Endothelial cell of umbilical vein (primary cell): ENCODE measurements at regions of chr10 and their contacts with region 1.

Region 1: GRCh38 chr10:97572214-97572989 is at the start of gene ANKRD2:
- DNase-seq: peak; percentile 66
- H3K4me3 ChIP-seq: no peak within 1 kb of the TSS
- H3K27ac ChIP-seq: no peak within 1 kb of the TSS
- H3K4me1 ChIP-seq: peaks cover 14% of the 10 kb centered on the region
- H3K27me3 ChIP-seq: no peaks in the 10 kb centered on the region
- CTCF ChIP-seq: peak; percentile 87 to 96
- POLR2A ChIP-seq: no peak
- total RNA-seq, gene ANKRD2: 1.6 and 2.3 TPM in 2 replicates

Region 2: GRCh38 chr10:97200616-97201015 is 371.8 kb before region 1 on chr10:
- CTCF ChIA-PET with region 1: no interaction called
- POLR2A ChIA-PET with region 1: no interaction called
- dilution Hi-C with region 1: no loop called
- intact Hi-C with region 1: no loop called
- DNase-seq: no peak
- H3K4me3 ChIP-seq: no peak overlapping the region
- H3K27ac ChIP-seq: no peak overlapping the region
- H3K4me1 ChIP-seq: no peaks in the 10 kb centered on the region
- H3K27me3 ChIP-seq: peaks cover 3% of the 10 kb centered on the region in 2 experiments
- CTCF ChIP-seq: no peak
- POLR2A ChIP-seq: no peak

Region 3: DNA sequence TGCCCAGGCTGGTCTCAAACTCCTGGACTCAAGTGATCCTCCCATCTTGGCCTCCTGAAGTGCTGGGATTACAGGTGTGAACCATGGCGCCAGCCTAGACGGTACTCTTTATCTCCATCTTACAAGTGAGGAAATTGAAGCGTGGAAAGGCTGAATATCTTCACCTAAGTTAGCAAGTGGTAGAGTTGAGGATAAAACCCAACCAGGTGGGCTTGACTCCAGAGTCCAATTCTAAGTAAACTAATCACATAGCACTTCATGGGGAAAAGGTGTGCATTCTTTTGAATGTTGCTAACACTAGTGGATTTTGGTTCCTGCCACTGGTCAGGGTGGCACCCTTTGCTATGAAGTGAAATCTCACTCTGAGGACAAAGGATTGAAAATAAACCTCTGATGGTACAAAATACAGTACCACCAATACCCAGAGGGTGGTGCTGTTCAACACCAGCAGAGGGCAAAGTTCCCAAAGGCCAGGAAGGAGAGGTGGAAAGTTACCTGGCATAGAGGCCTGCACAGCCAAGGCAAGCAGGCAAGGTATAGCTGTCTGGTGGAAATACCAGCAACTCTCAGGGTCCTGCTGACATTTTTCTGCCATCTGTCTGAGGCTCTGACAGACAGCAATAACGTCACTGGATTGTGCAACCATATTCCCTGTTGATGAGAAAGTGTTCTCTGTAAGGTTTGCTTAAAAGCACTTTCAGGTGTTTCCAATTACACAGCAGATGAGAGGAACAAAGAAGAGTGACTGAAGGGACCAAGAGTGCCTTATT is 108.9 kb before region 1 on chr10:
- CTCF ChIA-PET with region 1: interaction called, 12 read pairs
- POLR2A ChIA-PET with region 1: no interaction called
- dilution Hi-C with region 1: no loop called
- intact Hi-C with region 1: no loop called
- DNase-seq: peak; percentile 68
- H3K4me3 ChIP-seq: no peak overlapping the region
- H3K27ac ChIP-seq: no peak overlapping the region
- H3K4me1 ChIP-seq: peaks cover 3% of the 10 kb centered on the region
- H3K27me3 ChIP-seq: no peaks in the 10 kb centered on the region
- CTCF ChIP-seq: peak; percentile 75 to 76
- POLR2A ChIP-seq: no peak

Region 4: DNA sequence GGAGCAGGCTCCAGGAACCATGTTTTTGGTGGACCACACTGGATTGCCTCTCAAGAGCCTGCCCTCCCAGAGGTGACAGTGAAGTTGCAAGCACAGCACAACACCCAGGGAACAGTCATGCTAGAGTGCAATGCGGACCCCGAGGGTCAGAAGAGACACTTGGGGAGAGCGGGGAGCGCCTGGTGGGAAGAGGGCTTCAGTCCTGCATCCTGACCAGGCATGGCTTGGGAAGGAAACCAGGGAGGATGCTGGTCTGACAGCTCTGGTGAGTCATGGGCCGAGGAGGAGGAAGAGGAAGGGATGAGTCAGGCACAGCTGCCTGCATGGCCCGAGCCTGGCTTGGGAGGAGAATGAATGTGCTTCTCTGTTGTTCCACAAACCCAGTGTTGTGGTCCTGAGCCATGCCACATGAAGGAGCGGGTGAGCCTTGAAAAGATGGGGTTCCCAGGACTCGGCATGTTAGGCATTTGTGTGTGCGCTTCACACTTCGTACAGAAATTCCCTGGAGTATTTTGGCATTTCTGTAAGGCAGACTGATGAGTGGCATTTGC is 29.3 kb before region 1 on chr10:
- CTCF ChIA-PET with region 1: interaction called, 7 read pairs
- POLR2A ChIA-PET with region 1: no interaction called
- dilution Hi-C with region 1: no loop called
- intact Hi-C with region 1: loop called (anchors 1 kb)
- DNase-seq: peak; percentile 98
- H3K4me3 ChIP-seq: no peak overlapping the region
- H3K27ac ChIP-seq: peak overlapping the region; percentile 99
- H3K4me1 ChIP-seq: peaks cover 61% of the 10 kb centered on the region
- H3K27me3 ChIP-seq: no peaks in the 10 kb centered on the region
- CTCF ChIP-seq: no peak
- POLR2A ChIP-seq: peak; percentile 80

Region 5: GRCh38 chr10:97584060-97584797 is 11.8 kb after region 1 on chr10 and contains the start of gene HOGA1:
- CTCF ChIA-PET with region 1: interaction called, 10 read pairs
- POLR2A ChIA-PET with region 1: no interaction called
- dilution Hi-C with region 1: no loop called
- intact Hi-C with region 1: no loop called
- DNase-seq: peak; percentile 47
- H3K4me3 ChIP-seq: no peak within 1 kb of the TSS
- H3K27ac ChIP-seq: no peak within 1 kb of the TSS
- H3K4me1 ChIP-seq: no peaks in the 10 kb centered on the region
- H3K27me3 ChIP-seq: no peaks in the 10 kb centered on the region
- CTCF ChIP-seq: no peak
- POLR2A ChIP-seq: no peak
- total RNA-seq, gene HOGA1: 0.46 and 0.91 TPM in 2 replicates

Region 6: GRCh38 chr10:97596101-97597062 is 24.0 kb after region 1 on chr10:
- CTCF ChIA-PET with region 1: interaction called, 32 read pairs
- POLR2A ChIA-PET with region 1: interaction called, 3 read pairs
- dilution Hi-C with region 1: no loop called
- intact Hi-C with region 1: loop called (anchors 1 kb)
- DNase-seq: peak; percentile 98
- H3K4me3 ChIP-seq: no peak overlapping the region
- H3K27ac ChIP-seq: peak overlapping the region; percentile 82
- H3K4me1 ChIP-seq: peaks cover 25% of the 10 kb centered on the region
- H3K27me3 ChIP-seq: no peaks in the 10 kb centered on the region
- CTCF ChIP-seq: no peak
- POLR2A ChIP-seq: peak; percentile 66

Region 7: GRCh38 chr10:97632949-97633884 is 60.8 kb after region 1 on chr10 and contains the start of gene MORN4:
- CTCF ChIA-PET with region 1: interaction called, 12 read pairs
- POLR2A ChIA-PET with region 1: interaction called, 4 read pairs
- dilution Hi-C with region 1: no loop called
- intact Hi-C with region 1: no loop called
- DNase-seq: peak; percentile 91
- H3K4me3 ChIP-seq: peak within 1 kb of the TSS; percentile 25 to 72 (median 56)
- H3K27ac ChIP-seq: no peak within 1 kb of the TSS
- H3K4me1 ChIP-seq: peaks cover 3% of the 10 kb centered on the region
- H3K27me3 ChIP-seq: no peaks in the 10 kb centered on the region
- CTCF ChIP-seq: no peak
- POLR2A ChIP-seq: no peak
- total RNA-seq, gene MORN4: 8.4 and 12.2 TPM in 2 replicates

Region 8: GRCh38 chr10:97731346-97732051 is 159.1 kb after region 1 on chr10:
- CTCF ChIA-PET with region 1: no interaction called
- POLR2A ChIA-PET with region 1: no interaction called
- dilution Hi-C with region 1: no loop called
- intact Hi-C with region 1: loop called (anchors 2 kb)
- DNase-seq: peak; percentile 79
- H3K4me3 ChIP-seq: no peak overlapping the region
- H3K27ac ChIP-seq: no peak overlapping the region
- H3K4me1 ChIP-seq: peaks cover 6% of the 10 kb centered on the region
- H3K27me3 ChIP-seq: no peaks in the 10 kb centered on the region
- CTCF ChIP-seq: peak; percentile 82
- POLR2A ChIP-seq: no peak